Activated naive CD4-positive, alpha-beta T cell treated with anti-CD3 and anti-CD28 coated beads for 36 hours (primary cell): ENCODE measurements at regions of chr17 and their contacts with region 1.

Region 1: DNA sequence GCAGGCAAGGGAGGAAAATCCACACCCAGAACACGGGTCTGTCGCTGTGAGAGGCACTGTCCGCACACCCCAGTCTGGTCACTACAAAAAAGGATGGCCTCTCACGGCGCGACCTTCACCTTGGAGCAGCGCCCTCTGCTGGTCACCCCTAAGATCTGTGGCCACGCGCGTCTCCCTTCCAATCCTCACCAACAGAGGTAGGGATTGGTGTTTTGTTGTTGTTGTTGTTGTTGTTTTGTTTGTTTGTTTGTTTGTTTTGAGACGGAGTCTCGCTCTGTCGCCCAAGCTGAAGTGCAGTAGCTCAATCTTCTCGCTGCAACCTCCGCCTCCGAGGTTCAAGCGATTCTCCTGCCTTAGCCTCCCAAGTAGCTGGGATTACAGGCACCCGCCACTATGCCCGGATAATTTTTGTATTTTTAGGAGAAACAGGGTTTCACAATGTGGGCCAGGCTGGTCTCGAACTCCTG is 15.0 kb upstream of the C17orf58 start:
- DNase-seq: peak; percentile 76
- H3K4me3 Mint-ChIP-seq: peak overlapping the region; percentile 60
- H3K27ac Mint-ChIP-seq: no peak overlapping the region
- H3K4me1 Mint-ChIP-seq: peaks cover 5% of the 10 kb centered on the region
- H3K27me3 Mint-ChIP-seq: no peaks in the 10 kb centered on the region

Region 2: DNA sequence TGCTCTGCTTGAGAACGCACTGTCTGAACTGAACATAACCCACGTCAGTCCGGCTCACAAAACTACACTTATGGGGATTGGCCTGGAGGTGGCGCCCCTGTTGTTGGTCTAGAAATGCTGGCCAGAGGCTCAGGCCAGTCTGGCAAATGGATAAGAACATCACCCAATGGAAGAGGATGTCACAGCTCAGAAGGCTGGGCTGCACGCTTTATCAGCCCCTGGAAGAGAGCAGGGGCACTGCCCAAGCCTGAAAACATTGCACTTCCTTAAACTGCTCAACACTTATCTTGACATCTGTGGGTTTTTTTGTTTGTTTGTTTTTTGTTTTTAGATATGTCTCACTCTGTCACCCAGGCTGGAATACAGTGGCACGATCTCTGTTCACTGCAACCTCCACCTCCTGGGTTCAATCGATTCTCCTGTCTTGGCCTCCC is 210.7 kb before region 1 on chr17:
- CTCF ChIA-PET with region 1: interaction called, 3 read pairs
- intact Hi-C with region 1: loop called (anchors 1 kb)
- DNase-seq: peak; percentile 73
- H3K4me3 Mint-ChIP-seq: no peak overlapping the region
- H3K27ac Mint-ChIP-seq: no peak overlapping the region
- H3K4me1 Mint-ChIP-seq: no peaks in the 10 kb centered on the region
- H3K27me3 Mint-ChIP-seq: no peaks in the 10 kb centered on the region

Region 3: GRCh38 chr17:67959288-67959900 is 51.8 kb before region 1 on chr17:
- CTCF ChIA-PET with region 1: interaction called, 4 read pairs
- intact Hi-C with region 1: loop called (anchors 1 kb)
- DNase-seq: no peak
- H3K4me3 Mint-ChIP-seq: no peak overlapping the region
- H3K27ac Mint-ChIP-seq: peak overlapping the region; percentile 68
- H3K4me1 Mint-ChIP-seq: peaks cover 15% of the 10 kb centered on the region
- H3K27me3 Mint-ChIP-seq: no peaks in the 10 kb centered on the region

Region 4: DNA sequence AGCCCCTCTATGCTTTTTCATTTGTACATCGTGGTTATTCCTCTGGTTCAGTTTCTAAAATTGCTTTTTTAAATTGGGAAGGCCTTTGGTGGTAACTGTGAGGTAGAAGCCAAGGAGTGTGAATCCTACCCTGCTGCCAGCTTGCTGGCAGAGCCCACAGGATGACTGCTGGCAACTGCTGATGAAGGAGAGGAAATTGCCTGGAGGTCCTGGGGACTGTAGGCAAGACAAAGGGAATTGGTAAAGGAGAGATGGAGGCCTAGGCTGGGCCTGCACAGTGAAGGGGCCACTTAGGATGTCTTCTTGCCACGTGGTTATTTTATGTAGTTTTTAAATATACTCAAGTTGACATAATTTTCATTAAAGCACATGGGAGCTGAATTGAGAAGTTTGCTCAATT is 30.8 kb before region 1 on chr17:
- CTCF ChIA-PET with region 1: no interaction called
- intact Hi-C with region 1: no loop called
- DNase-seq: no peak
- H3K4me3 Mint-ChIP-seq: no peak overlapping the region
- H3K27ac Mint-ChIP-seq: no peak overlapping the region
- H3K4me1 Mint-ChIP-seq: no peaks in the 10 kb centered on the region
- H3K27me3 Mint-ChIP-seq: no peaks in the 10 kb centered on the region